Uterus (tissue), 4 donors: ENCODE measurements at regions of chr19 and their contacts with region 1.

Region 1: DNA sequence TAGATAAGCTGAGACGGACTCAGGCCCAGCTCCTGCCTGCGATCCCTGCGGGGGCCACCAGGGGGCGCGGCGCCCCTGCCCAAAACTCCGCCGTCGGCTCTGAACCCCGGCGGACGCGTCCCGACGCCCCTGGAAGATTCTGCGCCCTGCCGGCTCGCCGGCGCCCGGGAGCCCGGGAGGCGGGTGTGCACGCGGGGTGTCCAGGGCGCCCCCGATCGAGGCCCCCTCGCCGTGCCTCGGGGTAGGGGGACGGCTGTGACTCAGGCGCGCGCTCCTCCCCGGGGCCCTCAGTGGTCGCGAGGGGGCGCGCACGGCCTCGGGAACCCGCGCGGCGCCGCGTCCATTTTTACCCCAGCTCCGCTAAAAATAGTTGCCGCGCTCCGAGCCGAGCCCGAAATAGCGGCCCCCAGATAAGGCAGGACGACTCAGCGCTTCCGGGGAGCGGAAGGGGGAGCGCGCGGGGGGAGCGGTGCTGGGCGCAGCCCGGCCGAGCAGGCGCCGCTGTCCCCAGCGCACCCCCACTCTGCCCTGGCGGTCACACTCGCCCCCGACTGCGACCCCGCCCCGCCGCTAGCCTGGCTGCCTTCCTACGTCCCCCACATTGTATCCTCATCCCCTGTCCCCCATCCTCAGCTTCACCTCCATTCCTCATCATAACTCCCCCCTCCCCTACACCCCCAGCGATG is 16.0 kb upstream of the ERCC1 start:
- DNase-seq: peak; percentile 90 to 92
- H3K4me3 ChIP-seq: peak overlapping the region; percentile 20 to 65
- H3K27ac ChIP-seq: peak overlapping the region; percentile 96
- H3K4me1 ChIP-seq: peaks cover 0 to 6% of the 10 kb centered on the region in 2 donors
- H3K27me3 ChIP-seq: no peaks in the 10 kb centered on the region
- CTCF ChIP-seq: peak; percentile 99
- POLR2A ChIP-seq: peak; percentile 14 to 44

Region 2: DNA sequence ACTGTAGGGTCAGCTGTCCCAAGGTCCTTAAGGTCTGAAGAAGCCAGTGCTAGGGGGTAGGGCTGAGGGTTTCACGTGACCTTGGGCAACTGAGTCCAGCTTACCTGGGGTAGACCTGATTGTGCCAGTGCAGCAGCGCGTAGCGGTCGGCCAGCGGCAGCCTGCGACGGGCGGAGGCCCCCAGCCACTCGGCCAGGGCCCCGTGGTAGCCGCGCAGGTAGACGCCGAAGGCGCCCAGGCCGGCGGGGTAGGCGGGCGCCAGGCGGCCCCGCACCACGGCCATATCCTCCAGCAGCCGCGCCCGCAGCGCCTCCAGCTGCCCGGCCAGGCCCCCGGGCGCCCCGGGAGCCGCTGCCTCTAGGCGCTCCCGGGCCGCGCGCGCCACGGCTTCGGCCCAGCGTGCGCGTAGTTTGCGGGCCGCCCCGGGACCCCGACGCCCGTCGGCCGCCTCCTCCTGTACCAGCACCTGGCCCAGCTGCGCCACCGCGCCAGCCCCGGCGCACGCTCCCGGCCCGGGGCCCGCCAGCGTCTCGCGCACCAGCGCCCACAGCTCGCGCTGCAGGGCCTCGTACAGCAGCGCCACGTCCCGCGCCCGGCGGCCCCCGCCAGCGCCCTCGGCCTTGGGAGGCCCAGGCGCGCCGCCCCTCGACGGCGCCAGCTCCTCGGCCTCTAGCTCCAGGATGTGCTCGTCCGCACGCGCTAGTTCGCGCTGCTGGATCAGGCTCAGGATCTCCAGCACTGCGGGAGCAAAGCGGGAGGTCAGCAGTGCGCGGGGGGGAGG is 205.4 kb before region 1 on chr19:
- intact Hi-C with region 1: no loop called
- DNase-seq: no peak
- H3K4me3 ChIP-seq: no peak overlapping the region
- H3K27ac ChIP-seq: no peak overlapping the region
- H3K4me1 ChIP-seq: no peaks in the 10 kb centered on the region
- H3K27me3 ChIP-seq: peaks cover 0 to 4% of the 10 kb centered on the region in 2 donors
- CTCF ChIP-seq: no peak
- POLR2A ChIP-seq: no peak

Region 3: GRCh38 chr19:45376045-45376724 is 63.5 kb before region 1 on chr19:
- intact Hi-C with region 1: no loop called
- DNase-seq: peak; percentile 64 to 66
- H3K4me3 ChIP-seq: no peak overlapping the region
- H3K27ac ChIP-seq: peak overlapping the region; percentile 21 to 60
- H3K4me1 ChIP-seq: no peaks in the 10 kb centered on the region
- H3K27me3 ChIP-seq: no peaks in the 10 kb centered on the region
- CTCF ChIP-seq: no peak
- POLR2A ChIP-seq: no peak

Region 4: GRCh38 chr19:45478454-45479238 is 38.9 kb after region 1 on chr19:
- intact Hi-C with region 1: loop called (anchors 2 kb)
- DNase-seq: peak; percentile 84 to 88
- H3K4me3 ChIP-seq: peak overlapping the region; percentile 50 to 51
- H3K27ac ChIP-seq: peak overlapping the region; percentile 94 to 99
- H3K4me1 ChIP-seq: no peaks in the 10 kb centered on the region
- H3K27me3 ChIP-seq: no peaks in the 10 kb centered on the region
- CTCF ChIP-seq: peak; percentile 97 to 98 (median 98)
- POLR2A ChIP-seq: no peak